Activated CD8-positive, alpha-beta memory T cell treated with anti-CD3 and anti-CD28 coated beads, Interleukin-2, amount 10 ng/mL, durations not matched to agents 7 days and 5 days (primary cell): ENCODE measurements at regions of chr10 and their contacts with region 1.

Region 1: DNA sequence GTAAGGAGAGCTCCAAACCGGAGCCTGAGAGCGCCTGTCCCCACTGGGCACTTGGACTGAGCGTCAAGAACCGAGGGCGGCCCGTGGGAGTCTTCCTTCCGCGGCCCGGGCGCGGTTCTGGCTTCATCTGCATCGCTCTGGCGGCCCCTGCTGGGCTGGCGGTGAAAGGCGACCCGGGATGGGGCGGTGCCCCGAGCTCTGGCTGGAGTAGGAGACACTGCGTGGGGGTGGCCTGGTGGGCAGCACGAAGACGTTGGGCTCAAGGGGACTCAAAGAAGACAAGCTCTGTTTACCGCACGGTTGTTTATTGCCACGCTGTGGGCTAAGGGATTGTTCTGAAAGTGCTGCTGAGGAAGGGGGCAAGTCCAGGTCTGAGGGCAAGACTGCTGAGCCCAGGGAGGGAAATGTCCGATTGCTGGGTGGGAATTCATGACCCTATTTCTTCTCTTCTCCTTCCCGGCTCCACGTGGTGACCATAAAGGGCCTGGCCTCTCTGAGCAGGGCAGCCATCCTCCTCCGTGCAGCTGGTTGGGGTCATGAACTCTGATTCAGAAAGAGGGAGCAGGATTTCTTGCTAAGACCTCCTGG is 29.8 kb downstream of the PLAU start:
- DNase-seq: peak; percentile 88
- ATAC-seq: peak; percentile 100
- H3K4me3 Mint-ChIP-seq: no peak overlapping the region
- H3K27ac Mint-ChIP-seq: peak overlapping the region; percentile 80
- H3K4me1 Mint-ChIP-seq: peaks cover 12% of the 10 kb centered on the region
- H3K27me3 Mint-ChIP-seq: peaks cover 11% of the 10 kb centered on the region

Region 2: DNA sequence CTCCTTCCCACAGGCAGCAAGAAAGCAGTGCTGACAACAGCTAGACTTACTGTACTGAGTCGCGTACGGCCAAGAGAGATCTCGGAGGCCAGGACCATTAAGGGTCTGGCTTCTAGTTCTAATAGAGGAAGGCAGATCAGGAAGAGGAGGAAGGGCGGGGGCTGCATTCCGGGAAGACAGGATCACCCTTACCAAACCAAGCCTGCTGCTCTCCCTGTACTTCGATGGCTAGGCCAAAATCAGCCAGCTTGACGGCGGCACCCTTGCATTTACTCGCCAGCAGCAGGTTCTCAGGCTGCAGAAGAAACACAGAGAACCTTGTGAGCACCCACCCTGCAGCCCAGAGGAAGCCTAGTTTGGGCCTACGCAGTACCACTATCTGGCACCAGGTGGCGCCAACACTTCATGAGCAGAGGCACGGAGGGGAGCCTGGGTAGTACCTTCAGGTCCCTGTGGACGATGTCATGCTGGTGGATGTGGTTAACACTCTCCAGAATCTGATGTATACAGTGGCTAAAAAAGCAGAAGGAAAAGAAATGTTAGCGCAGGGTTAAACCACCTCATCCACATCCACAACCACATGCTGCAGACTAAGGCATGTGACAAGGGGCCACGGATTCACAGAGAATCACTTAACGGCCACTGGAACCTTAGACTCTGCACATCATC is 91.8 kb before region 1 on chr10:
- CTCF ChIA-PET with region 1: interaction called, 25 read pairs
- DNase-seq: peak; percentile 96
- ATAC-seq: peak; percentile 98
- H3K4me3 Mint-ChIP-seq: peak overlapping the region; percentile 48
- H3K27ac Mint-ChIP-seq: peak overlapping the region; percentile 78
- H3K4me1 Mint-ChIP-seq: peaks cover 15% of the 10 kb centered on the region
- H3K27me3 Mint-ChIP-seq: no peaks in the 10 kb centered on the region

Region 3: DNA sequence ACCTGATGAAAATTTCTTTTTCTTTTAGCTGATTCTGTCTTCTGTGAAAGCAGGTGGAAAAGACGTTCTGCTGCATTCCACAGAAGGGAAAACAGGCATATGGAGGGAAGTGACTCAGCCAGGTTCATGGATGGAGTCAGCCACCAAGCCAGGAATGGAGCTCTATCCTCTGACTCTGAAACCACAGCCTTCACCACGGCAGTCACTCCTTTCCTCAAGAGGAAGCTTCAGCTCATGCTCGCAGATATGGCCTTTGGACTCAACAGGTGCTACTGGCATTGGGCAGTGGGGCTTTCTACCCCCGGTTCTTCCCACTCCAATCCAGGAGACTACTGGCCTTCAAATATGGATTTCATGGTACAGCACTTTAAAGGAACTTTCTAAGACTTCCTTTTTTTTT is 41.3 kb before region 1 on chr10:
- CTCF ChIA-PET with region 1: interaction called, 642 read pairs
- DNase-seq: no peak
- ATAC-seq: no peak
- H3K4me3 Mint-ChIP-seq: no peak overlapping the region
- H3K27ac Mint-ChIP-seq: no peak overlapping the region
- H3K4me1 Mint-ChIP-seq: peaks cover 18% of the 10 kb centered on the region
- H3K27me3 Mint-ChIP-seq: peaks cover 17% of the 10 kb centered on the region

Region 4: GRCh38 chr10:73922007-73922863 is 18.5 kb before region 1 on chr10:
- CTCF ChIA-PET with region 1: interaction called, 26 read pairs
- DNase-seq: peak; percentile 54
- ATAC-seq: peak; percentile 82
- H3K4me3 Mint-ChIP-seq: peak overlapping the region; percentile 21
- H3K27ac Mint-ChIP-seq: peak overlapping the region; percentile 77
- H3K4me1 Mint-ChIP-seq: peaks cover 35% of the 10 kb centered on the region
- H3K27me3 Mint-ChIP-seq: peaks cover 25% of the 10 kb centered on the region

Region 5: DNA sequence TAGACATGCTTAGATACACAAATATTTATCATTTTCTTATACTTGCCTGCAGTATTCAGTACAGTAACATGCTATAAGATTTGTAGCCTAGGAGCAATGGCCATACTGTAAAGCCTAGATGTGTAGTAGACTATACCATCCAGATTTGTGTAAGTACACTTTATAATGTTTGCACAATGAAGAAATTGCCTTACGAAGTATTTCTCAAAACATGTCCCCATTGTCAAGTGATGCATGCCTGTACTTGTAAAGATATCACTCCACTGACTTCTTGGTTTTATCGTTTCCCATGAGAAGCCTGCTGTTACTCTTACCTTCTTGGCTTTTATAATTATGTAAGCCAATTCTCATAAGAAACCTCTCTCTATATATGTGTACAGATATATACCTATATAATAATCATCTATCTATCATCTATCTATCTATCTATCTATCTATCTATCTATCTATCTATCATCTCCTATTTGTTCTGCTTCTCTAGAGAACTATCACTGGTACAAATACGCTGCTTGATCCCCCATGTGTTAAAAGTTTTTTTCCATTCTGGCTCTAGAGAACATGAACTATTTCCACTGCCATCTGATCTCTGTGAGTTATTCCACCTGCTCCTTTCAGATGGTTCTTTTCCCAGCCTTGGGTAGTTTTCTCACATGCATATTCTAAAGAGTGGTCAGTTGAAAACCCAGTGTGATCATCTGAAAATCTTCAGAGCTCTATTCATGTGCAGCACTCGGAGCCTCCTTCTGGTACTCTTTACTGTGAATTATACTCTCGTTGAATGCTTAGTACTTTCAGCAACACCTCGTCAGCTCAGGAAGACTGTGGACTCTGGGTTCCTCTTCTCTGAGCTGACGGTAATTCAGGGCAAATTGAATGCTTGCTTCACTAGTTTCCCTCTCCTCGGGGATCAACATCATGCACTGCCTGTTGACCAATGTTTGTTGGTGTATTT is 42.6 kb after region 1 on chr10:
- CTCF ChIA-PET with region 1: no interaction called
- DNase-seq: no peak
- ATAC-seq: no peak
- H3K4me3 Mint-ChIP-seq: no peak overlapping the region
- H3K27ac Mint-ChIP-seq: no peak overlapping the region
- H3K4me1 Mint-ChIP-seq: peaks cover 8% of the 10 kb centered on the region
- H3K27me3 Mint-ChIP-seq: peaks cover 31% of the 10 kb centered on the region

Region 6: GRCh38 chr10:74058658-74059057 is 117.9 kb after region 1 on chr10:
- CTCF ChIA-PET with region 1: interaction called, 13 read pairs
- DNase-seq: peak; percentile 54
- ATAC-seq: no peak
- H3K4me3 Mint-ChIP-seq: no peak overlapping the region
- H3K27ac Mint-ChIP-seq: no peak overlapping the region
- H3K4me1 Mint-ChIP-seq: peaks cover 39% of the 10 kb centered on the region
- H3K27me3 Mint-ChIP-seq: no peaks in the 10 kb centered on the region